CD8-positive, alpha-beta T cell (primary cell): ENCODE measurements at regions of chr1 and their contacts with region 1.

Region 1: GRCh38 chr1:110455151-110455550 is 4.2 kb downstream of the PROK1 start:
- DNase-seq: no peak
- ATAC-seq: no peak
- H3K4me3 ChIP-seq: no peak overlapping the region
- H3K4me3 Mint-ChIP-seq: no peak overlapping the region
- H3K27ac ChIP-seq: no peak overlapping the region
- H3K27ac Mint-ChIP-seq: no peak overlapping the region
- H3K4me1 ChIP-seq: no peaks in the 10 kb centered on the region
- H3K4me1 Mint-ChIP-seq: no peaks in the 10 kb centered on the region
- H3K27me3 ChIP-seq: no peaks in the 10 kb centered on the region
- H3K27me3 Mint-ChIP-seq: peaks cover 4% of the 10 kb centered on the region
- CTCF ChIP-seq: no peak

Region 2: GRCh38 chr1:109969146-109969829 is 485.9 kb before region 1 on chr1:
- CTCF ChIA-PET with region 1: no interaction called
- POLR2A ChIA-PET with region 1: no interaction called
- intact Hi-C with region 1: no loop called
- DNase-seq: no peak
- ATAC-seq: no peak
- H3K4me3 ChIP-seq: no peak overlapping the region
- H3K4me3 Mint-ChIP-seq: no peak overlapping the region
- H3K27ac ChIP-seq: no peak overlapping the region
- H3K27ac Mint-ChIP-seq: no peak overlapping the region
- H3K4me1 ChIP-seq: no peaks in the 10 kb centered on the region
- H3K4me1 Mint-ChIP-seq: no peaks in the 10 kb centered on the region
- H3K27me3 ChIP-seq: no peaks in the 10 kb centered on the region
- H3K27me3 Mint-ChIP-seq: no peaks in the 10 kb centered on the region
- CTCF ChIP-seq: no peak

Region 3: GRCh38 chr1:110196917-110197765 is 258.0 kb before region 1 on chr1:
- CTCF ChIA-PET with region 1: interaction called, 313 read pairs
- POLR2A ChIA-PET with region 1: interaction called, 6 read pairs
- intact Hi-C with region 1: loop called (anchors 1 kb)
- DNase-seq: peak in 8 of 9 experiments; percentile 15 to 71 (median 55)
- ATAC-seq: peak; percentile 99
- H3K4me3 ChIP-seq: no peak overlapping the region
- H3K4me3 Mint-ChIP-seq: no peak overlapping the region
- H3K27ac ChIP-seq: no peak overlapping the region
- H3K27ac Mint-ChIP-seq: no peak overlapping the region
- H3K4me1 ChIP-seq: no peaks in the 10 kb centered on the region
- H3K4me1 Mint-ChIP-seq: no peaks in the 10 kb centered on the region
- H3K27me3 ChIP-seq: no peaks in the 10 kb centered on the region
- H3K27me3 Mint-ChIP-seq: no peaks in the 10 kb centered on the region
- CTCF ChIP-seq: peak; percentile 94

Region 4: DNA sequence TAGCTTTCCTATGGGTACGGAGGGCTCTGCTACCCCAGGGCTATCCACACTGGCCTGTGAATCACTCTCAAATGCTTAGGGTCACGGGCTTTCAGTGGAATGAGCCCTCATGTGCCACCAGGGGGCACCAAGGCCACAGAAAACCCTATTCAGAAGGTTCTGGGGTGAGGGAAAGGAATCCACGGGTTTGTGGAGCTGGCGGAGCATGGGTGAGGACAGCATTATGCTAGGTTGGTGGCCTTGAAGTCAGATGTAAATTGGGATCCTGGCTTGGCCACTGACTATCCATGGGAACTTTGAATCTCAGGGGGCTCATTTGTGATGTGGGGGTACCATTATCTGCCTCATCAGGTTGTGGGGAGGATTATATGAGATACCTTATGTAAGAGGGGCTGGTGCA is 42.6 kb before region 1 on chr1:
- CTCF ChIA-PET with region 1: interaction called, 89 read pairs
- POLR2A ChIA-PET with region 1: no interaction called
- intact Hi-C with region 1: loop called (anchors 1 kb)
- DNase-seq: peak; percentile 25 to 72 (median 60)
- ATAC-seq: peak; percentile 41
- H3K4me3 ChIP-seq: no peak overlapping the region
- H3K4me3 Mint-ChIP-seq: no peak overlapping the region
- H3K27ac ChIP-seq: no peak overlapping the region
- H3K27ac Mint-ChIP-seq: no peak overlapping the region
- H3K4me1 ChIP-seq: peaks cover 6% of the 10 kb centered on the region
- H3K4me1 Mint-ChIP-seq: peaks cover 18% of the 10 kb centered on the region
- H3K27me3 ChIP-seq: no peaks in the 10 kb centered on the region
- H3K27me3 Mint-ChIP-seq: no peaks in the 10 kb centered on the region
- CTCF ChIP-seq: peak; percentile 64

Region 5: DNA sequence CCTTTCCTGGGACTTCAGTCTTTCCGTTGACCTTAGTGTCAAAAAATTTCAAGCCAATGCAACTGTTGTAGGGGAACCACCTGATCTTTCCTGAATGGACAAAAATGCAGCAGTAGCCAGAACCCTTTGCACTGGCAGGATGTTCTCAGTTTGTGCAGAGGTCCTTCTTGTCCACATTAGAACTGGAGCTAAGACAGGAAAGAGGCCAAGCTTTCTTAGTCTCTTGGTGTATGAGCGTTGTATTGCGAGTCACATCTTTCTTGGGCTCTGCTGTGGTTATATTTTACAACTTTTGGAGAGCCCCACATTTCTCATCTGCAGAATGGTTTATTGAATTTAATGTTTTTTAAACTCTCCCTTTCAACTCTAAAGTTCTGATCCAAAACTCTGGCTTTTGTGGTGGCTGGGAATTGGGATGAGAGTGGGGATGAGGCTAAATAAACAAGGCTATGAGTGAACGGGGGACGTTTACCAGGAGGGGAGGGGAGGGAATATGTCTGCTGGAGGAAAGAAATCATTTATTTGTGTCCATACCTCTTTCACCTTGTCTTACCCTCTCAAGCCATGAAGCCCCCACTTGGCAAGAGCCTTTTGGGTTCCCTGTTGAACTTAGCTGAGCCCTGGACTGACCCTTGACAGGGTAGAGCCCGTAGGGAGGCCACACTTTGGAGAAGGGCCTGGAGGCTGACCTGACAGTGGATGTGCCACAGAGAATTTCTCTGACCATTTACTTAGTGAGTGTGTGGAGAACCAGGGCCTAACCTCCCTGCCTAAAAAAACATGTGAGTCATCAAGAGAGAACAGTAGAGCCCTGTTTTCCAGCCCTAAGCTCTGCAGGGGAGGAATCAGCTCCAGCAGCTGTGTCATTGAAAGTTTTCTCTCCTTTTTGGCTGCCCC is 772.9 kb after region 1 on chr1:
- CTCF ChIA-PET with region 1: no interaction called
- POLR2A ChIA-PET with region 1: no interaction called
- intact Hi-C with region 1: no loop called
- DNase-seq: peak in 1 of 9 experiments; percentile 23
- ATAC-seq: no peak
- H3K4me3 ChIP-seq: peak overlapping the region in 1 of 2 experiments; percentile 5
- H3K4me3 Mint-ChIP-seq: peak overlapping the region; percentile 22
- H3K27ac ChIP-seq: peak overlapping the region; percentile 4 to 79
- H3K27ac Mint-ChIP-seq: peak overlapping the region; percentile 89
- H3K4me1 ChIP-seq: peaks cover 73% of the 10 kb centered on the region
- H3K4me1 Mint-ChIP-seq: peaks cover 81% of the 10 kb centered on the region
- H3K27me3 ChIP-seq: no peaks in the 10 kb centered on the region
- H3K27me3 Mint-ChIP-seq: no peaks in the 10 kb centered on the region
- CTCF ChIP-seq: no peak